Natural killer cell (primary cell): ENCODE measurements at regions of chr15 and their contacts with region 1.

Region 1: GRCh38 chr15:57819646-57820045 is 113.1 kb downstream of the POLR2M start:
- DNase-seq: no peak
- ATAC-seq: no peak
- H3K4me3 ChIP-seq: no peak overlapping the region
- H3K4me3 Mint-ChIP-seq: no peak overlapping the region
- H3K27ac ChIP-seq: no peak overlapping the region
- H3K27ac Mint-ChIP-seq: no peak overlapping the region
- H3K4me1 ChIP-seq: no peaks in the 10 kb centered on the region
- H3K4me1 Mint-ChIP-seq: no peaks in the 10 kb centered on the region
- H3K27me3 ChIP-seq: peaks cover 2% of the 10 kb centered on the region
- H3K27me3 Mint-ChIP-seq: peaks cover 28 to 32% of the 10 kb centered on the region in 2 donors
- CTCF ChIP-seq: no peak

Region 2: DNA sequence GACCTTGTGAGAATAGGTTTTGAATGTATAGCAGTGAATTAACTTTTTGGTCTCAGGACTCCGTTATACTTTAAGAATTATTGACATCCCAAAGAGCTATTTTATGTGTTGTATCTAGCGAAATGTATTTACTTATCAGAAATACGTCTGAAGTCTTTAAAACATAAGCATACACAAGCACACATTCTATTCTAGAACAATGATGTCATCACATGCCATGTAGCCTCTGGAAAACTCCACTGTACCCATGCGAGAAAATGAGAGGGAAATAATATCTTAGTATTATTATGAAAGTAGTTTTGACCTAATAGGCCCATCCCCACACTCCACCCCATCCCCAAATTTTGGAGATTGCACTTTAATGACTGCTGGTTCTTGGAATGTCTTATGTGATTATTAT is 111.6 kb before region 1 on chr15:
- intact Hi-C with region 1: no loop called
- DNase-seq: no peak
- ATAC-seq: no peak
- H3K4me3 ChIP-seq: no peak overlapping the region
- H3K4me3 Mint-ChIP-seq: peak overlapping the region; percentile 91
- H3K27ac ChIP-seq: no peak overlapping the region
- H3K27ac Mint-ChIP-seq: peak overlapping the region; percentile 79 to 85
- H3K4me1 ChIP-seq: peaks cover 10% of the 10 kb centered on the region
- H3K4me1 Mint-ChIP-seq: peaks cover 38 to 46% of the 10 kb centered on the region in 2 donors
- H3K27me3 ChIP-seq: no peaks in the 10 kb centered on the region
- H3K27me3 Mint-ChIP-seq: peaks cover 0 to 3% of the 10 kb centered on the region in 2 donors
- CTCF ChIP-seq: no peak

Region 3: DNA sequence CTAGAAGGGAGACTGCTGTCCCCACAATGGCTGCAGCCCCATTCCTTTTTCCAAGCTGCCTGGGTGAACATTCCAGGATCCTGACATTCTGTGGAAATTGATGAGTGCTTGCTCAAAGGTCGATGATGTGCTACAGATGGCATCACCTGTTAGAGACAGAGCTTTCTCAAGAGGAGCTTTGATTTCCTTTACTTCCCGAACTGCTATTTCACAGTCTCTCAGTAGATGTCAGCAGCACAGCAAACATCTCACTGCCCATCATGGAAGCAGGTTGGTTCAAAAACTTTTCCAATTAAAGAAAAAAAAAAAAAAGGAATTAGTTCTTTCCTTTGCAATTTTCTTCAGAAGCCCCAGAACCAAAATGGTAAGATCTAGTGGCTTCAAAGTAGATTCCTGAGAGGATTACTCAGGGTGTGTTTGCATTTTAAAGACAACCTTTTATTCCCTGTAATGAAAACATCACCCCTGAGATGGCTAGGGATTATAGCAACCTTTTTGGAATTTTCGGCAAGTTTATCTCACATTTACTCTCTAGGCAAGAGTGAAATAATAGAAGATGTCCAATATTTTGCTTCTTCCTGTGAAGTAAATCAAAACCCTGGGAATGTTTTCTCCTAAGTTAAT is 68.4 kb before region 1 on chr15:
- intact Hi-C with region 1: loop called (anchors 10 kb)
- DNase-seq: no peak
- ATAC-seq: no peak
- H3K4me3 ChIP-seq: no peak overlapping the region
- H3K4me3 Mint-ChIP-seq: no peak overlapping the region
- H3K27ac ChIP-seq: no peak overlapping the region
- H3K27ac Mint-ChIP-seq: no peak overlapping the region
- H3K4me1 ChIP-seq: no peaks in the 10 kb centered on the region
- H3K4me1 Mint-ChIP-seq: no peaks in the 10 kb centered on the region
- H3K27me3 ChIP-seq: no peaks in the 10 kb centered on the region
- H3K27me3 Mint-ChIP-seq: peaks cover 0 to 3% of the 10 kb centered on the region in 2 donors
- CTCF ChIP-seq: no peak

Region 4: DNA sequence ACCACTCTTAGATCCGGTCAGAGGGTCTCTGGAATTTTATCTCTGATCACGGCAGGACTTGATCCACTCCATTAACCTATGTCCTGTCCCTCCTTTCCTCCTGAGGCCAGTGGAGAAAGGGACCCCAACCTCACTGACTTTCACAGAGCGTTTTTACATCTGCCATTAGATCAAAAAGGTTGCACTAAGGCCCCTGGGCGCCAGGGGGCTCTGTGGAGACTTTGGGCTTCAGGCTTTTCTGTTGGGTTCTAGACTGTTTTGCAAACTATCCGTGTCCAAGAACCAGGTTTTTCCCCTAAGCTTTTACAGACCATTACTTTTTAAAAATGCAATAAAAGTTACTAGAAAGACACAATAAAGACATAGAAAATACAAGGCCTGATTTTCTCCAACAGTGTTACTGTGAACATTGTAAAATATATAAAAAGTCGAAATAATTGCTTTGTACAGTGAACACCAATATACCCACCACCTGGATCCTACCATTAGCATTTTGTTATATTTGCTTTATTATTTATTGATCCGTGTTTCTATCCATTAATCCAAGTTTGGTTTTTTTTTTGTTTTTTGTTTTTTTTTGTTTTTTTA is 46.6 kb after region 1 on chr15:
- intact Hi-C with region 1: no loop called
- DNase-seq: peak; percentile 23 to 55
- ATAC-seq: peak in 2 of 3 donors; percentile 47 to 53
- H3K4me3 ChIP-seq: no peak overlapping the region
- H3K4me3 Mint-ChIP-seq: no peak overlapping the region
- H3K27ac ChIP-seq: no peak overlapping the region
- H3K27ac Mint-ChIP-seq: no peak overlapping the region
- H3K4me1 ChIP-seq: peaks cover 16% of the 10 kb centered on the region
- H3K4me1 Mint-ChIP-seq: peaks cover 18 to 26% of the 10 kb centered on the region in 2 donors
- H3K27me3 ChIP-seq: peaks cover 10% of the 10 kb centered on the region
- H3K27me3 Mint-ChIP-seq: peaks cover 23 to 83% of the 10 kb centered on the region in 2 donors
- CTCF ChIP-seq: peak; percentile 70